Posterior cingulate gyrus (tissue), 11 donors: ENCODE measurements at regions of chr17 and their contacts with region 1.

Region 1: DNA sequence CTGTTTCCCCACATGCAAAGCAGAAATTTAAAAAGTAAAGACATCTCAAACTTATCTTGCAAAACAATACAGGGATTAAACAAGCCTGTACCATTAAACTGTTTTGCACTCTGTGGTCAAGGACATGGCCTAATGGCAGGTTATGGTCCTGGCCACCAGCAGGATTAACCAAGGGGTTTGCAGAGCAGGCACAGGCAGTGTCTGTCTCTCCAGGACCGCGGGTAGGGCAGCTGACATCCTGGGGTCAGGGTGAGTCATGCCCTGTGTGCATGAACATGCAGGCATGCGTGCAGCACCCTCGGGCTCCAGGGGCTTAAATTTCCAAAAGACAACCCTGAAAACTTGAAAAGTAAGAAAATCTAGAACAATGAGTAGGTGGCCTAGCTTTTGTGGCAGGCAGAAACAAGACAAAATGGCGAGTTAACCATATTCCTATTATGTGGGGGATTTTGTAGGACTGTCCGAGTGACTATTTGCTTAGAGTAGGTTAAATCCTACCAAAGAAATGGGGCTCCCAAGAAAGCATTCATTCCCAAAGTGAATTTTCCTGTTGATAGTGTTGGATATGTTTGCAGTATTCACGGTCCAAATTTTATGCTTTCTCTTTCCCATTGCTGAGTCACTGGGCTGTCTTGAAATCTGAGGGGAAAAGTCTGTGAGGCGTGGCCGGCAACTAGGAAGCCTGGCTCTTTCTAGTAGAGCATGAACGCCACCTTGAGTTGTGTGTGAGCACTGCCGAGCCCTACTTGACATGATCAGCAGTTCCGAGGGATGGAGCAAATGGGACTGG is 158.4 kb upstream of the FAM20A start:
- DNase-seq: peak; percentile 73 to 97 (median 84)

Region 2: GRCh38 chr17:68172461-68172954 is 587.0 kb before region 1 on chr17:
- intact Hi-C with region 1: loop called (anchors 5 kb)
- DNase-seq: peak in 8 of 10 donors; percentile 52 to 93 (median 76)

Region 3: DNA sequence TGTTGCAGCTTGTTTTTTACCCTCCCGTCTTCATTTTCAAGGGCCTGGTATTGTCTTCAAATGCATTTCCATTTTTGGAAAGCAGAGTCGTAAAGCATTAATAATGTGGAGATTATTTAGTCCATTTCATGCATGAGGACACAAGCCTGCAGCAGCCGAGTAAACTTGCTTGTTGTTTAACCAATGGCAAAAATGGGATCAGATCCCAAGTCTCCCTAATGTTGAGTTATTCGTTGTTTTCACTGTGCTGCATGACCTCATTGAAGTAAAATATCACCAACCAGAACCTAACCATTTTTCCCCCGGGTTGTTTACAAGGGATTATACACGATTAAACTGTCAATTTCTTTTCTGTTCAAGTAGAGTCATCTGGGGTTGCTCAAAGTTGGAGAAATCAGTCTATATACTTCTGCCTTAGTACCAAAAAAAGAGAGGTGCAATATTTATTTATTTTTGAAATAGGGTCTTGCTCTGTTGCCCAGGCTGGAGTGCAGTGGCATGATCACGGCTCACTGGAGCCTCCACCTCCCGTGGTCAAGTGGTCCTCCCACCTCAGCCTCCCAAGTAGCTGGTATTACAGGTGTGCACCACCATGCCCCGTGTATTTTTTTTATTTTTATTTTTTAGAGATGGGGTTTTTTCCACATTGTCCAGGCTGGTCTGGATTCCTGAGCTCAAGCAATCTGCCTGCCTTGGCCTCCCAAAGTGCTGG is 499.3 kb before region 1 on chr17:
- intact Hi-C with region 1: loop called (anchors 10 kb)
- DNase-seq: no peak

Region 4: DNA sequence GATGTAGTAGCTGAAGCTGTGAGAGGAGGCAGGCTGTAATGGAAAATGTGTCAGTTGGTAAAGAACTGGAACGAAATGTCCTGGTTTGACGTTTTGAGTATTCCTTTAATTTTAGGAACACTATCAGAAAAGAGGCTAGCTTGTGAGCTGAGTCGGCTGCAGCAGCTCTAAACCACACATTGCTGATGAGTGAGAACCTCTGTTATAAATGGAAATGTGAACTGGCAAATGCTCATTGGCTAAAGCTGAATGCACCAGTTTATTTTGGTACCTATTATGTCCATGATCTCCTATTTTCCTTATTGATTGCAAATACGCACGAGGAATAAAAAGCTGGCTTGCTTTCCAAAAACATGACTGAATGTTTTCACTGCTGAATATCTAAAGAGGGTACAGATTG is 291.2 kb before region 1 on chr17:
- intact Hi-C with region 1: loop called (anchors 5 kb)
- DNase-seq: no peak

Region 5: GRCh38 chr17:68533887-68534694 is 225.4 kb before region 1 on chr17:
- intact Hi-C with region 1: loop called (anchors 5 kb)
- DNase-seq: no peak

Region 6: DNA sequence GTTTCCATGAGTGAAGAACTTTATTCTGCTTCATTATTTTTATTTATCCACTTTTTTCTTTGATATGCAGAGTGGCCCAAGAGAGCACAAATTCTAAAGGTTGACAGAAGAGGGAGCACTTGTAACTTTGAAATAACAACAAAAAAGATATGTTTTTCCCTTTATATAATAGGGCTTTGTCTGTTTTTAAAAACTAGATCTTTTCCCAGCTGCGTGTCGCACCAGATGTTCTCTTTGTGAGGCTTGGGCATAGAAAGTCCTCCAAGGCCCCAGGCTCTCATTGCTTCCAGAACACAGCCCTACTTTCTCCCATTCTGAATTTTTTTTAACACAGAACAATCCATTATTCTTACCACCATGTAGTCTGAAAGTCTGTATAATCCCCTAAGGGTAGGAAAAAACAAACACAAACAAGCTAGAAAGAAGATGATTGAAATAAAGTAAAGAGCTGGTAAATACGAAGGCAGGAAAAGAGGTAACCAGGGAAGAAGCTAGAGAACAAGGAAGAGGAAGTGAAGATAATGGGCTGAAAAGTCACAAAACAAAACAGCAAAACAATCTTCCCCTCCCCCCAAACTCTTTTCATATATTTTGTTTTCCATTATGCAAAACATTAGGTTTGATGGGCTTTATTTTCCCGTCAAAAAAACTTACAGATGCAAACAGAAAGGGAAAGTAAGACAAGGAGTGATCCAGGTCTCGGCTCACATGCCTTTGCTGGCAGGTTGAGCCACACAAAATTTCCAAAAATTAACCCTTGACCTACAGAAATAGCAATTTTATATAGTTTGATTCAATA is 35.3 kb after region 1 on chr17:
- intact Hi-C with region 1: no loop called
- DNase-seq: peak in 8 of 10 donors; percentile 27 to 94 (median 64)

Region 7: DNA sequence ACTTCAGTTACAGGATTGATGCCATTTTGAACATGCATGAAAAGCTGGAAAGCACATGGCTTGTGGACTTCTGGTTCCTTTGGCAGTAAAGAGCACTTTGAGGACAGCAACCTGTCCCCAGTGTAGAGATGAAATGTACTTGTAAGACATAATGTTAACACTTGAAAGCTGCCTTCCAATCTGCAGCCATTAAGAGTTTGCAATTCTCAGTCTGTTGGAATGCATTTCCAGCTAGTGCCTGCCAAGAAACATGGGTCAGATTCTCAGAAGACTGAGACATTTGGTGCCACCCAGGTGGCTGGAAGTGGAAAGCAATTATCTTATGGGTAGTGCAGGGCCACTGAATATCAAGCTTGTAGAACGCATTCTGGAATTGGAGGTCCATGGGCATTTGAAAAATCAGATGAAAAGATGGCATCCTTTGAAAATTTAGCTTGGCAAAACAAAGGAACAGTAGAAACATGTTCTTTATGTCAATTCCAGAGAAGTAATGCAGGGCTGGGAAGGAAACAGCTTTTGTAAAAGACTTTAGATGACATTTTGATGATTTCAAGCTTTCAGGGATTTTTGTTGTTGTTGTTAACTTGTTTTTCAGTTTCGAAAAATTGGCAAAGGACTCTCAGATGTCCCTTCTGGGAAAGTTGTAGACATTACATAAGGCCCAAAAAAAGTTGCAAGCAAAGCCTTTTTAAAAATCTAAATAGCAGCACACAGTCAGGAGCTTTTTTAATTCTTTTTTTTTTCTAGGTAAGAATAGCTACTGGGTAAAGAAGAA is 48.6 kb after region 1 on chr17:
- intact Hi-C with region 1: no loop called
- DNase-seq: no peak

Region 8: DNA sequence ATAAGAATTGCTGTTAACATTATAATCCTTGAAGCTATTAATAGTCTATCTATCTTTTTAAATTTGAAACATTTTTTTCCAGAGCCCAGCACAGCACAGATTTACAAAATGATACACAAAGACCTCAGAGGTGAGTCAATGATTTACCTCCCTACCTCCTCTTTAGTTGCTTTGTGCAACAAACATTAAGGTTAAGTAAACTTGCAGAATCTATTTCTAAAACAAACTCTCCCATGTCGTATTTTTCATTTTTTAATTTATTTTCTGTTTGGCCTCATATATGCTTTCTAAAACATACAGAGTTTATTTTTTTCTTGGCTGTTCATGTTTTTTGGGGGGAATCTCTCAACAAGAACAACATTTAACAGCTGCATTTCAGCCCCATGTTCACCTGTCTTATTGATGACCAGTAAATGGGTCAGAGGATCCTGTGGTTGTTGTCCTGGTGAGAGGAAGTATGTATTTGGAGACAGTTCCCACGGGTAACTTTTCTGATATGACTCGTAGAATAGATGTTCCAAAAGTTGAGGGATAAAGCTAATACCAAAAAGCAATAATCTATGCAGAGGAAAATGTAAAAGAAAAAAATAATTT is 258.6 kb after region 1 on chr17:
- intact Hi-C with region 1: no loop called
- DNase-seq: no peak